Calu3 (cell line): ENCODE measurements at regions of chr7 and their contacts with region 1.

Region 1: DNA sequence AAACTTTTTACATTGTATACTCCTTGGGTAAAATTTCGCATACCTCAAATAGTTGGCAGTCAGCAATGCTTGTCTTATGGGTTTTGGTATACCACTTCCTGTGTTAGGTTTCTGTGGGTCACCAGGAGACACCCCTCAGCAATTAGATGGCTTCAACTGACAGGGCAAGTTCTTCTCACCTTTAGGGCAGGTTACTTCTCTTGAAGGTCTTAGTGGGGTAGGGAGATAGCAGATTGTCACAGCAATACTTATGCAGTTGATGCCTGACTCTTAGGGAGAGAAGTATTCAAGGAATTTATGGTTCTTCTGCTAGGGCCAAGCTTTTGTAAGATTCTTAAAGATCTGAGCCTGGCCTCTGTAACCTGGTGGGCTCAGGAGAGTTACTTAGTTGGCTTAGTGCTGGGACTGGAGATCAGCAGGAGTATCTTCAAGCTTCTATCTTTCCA is 42.9 kb downstream of the MKLN1 start:
- DNase-seq: no peak
- H3K4me3 Mint-ChIP-seq: no peak overlapping the region
- H3K27ac Mint-ChIP-seq: no peak overlapping the region
- H3K4me1 Mint-ChIP-seq: peaks cover 33% of the 10 kb centered on the region
- H3K27me3 Mint-ChIP-seq: no peaks in the 10 kb centered on the region
- CTCF ChIP-seq: no peak

Region 2: DNA sequence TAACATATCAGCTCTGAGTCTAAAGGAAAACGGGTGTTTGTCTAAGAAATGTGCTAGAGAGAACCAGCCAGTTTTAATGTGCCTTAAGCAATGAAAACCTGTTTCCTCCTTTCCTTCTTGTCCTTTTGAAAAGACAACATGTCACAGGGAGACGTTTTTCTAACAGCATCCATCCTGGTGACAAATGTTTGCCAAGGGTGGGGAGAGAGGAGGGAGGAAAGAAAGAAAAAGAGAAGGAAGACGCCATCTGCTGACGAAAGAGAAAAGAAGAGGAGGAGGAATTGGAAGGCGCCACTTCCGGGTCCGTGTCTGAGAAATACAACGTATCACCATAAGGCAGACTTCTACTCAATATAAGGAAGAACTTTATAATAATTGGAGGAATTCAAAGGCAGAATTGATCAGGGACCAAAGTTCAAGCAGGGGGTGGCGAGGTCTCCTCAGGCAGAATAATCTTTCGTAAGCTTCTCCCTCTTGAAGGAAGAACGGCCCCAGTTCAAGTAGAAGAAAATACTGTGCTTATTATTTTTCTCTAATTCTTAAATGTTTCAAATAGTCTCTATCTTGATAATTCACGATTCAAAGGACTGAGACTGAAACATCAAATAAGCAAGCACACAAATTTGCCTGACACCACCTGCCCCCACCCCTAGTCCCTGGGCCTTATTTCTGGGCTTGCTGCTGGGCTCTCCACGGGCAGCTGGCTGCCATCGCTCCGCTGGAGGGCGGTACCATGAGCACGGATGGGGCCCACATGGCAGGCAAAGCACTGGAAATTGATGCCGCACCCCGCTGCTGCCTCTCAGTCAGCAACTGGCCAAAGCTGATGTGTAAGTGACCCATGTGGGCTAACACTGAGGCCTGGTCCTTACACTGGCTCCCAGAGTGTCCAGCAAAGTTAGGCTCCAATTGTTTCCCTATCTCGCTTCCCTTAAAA is 362.9 kb before region 1 on chr7:
- CTCF ChIA-PET with region 1: no interaction called
- intact Hi-C with region 1: no loop called
- DNase-seq: peak; percentile 79
- H3K4me3 Mint-ChIP-seq: peak overlapping the region; percentile 22
- H3K27ac Mint-ChIP-seq: peak overlapping the region; percentile 87
- H3K4me1 Mint-ChIP-seq: peaks cover 75% of the 10 kb centered on the region
- H3K27me3 Mint-ChIP-seq: no peaks in the 10 kb centered on the region
- CTCF ChIP-seq: peak; percentile 28

Region 3: DNA sequence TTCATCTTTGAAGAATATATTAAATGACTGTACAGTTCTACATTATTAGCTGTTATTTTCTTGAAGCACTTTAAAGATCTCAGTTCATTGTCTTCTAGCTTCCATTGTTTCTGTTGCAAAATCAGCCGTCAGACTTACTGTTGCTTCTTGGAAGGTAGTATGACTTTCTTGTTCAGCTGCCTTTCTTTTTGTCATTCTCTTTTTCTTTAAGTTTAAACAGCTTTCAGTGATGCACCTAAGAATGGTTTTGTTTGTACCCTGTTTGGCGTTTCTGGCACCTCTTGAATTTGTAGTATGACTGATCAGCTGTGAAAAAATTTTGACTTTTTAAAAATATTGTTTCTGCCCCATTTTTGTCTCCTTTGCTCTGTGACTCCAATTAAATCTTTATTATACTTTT is 33.6 kb before region 1 on chr7:
- CTCF ChIA-PET with region 1: no interaction called
- intact Hi-C with region 1: loop called (anchors 5 kb)
- DNase-seq: no peak
- H3K4me3 Mint-ChIP-seq: no peak overlapping the region
- H3K27ac Mint-ChIP-seq: no peak overlapping the region
- H3K4me1 Mint-ChIP-seq: no peaks in the 10 kb centered on the region
- H3K27me3 Mint-ChIP-seq: no peaks in the 10 kb centered on the region
- CTCF ChIP-seq: no peak